ENCODE measurements at regions of chr1 and their contacts with region 1.

Region 1: DNA sequence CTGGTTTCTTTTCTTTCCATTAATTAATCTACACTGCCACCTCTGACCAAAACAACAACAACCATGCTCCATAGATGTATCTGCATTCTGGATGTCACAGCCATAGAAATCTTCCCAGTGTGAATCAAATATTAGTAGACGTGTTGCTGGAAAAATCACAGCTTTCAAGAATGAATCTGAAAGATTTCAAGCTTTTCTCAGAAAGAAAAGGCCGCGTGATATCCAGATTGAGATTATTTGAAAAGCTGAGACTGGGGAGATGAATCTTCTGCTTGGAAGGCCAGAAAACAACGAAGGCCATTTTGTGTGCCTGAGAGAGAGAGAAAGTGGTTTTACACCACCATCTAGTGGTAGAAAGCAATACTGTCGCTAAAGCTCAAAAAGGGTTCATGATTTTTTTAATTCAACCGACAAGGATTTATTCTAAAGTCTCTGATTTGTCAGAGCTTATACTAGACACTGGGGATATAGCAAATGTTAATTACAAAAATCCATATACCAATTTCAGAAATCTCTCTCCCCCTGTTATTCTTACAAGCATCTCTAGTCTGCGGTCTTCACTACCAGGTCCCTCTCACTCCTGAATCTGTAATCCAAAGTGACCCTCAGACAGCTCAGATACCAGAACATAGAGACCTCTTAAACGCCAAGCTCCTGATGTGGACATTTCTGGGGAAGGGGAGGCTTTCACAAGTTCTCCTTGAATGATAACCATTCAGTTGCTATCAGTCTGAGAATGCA is 87.5 kb upstream of the SGIP1 start:
- DNase-seq: peak in 3 of 4 donors; percentile 9 to 46 (median 30)
- ATAC-seq: peak; percentile 75
- H3K4me3 ChIP-seq: no peak overlapping the region
- H3K27ac ChIP-seq: no peak overlapping the region
- H3K4me1 ChIP-seq: no peaks in the 10 kb centered on the region
- H3K27me3 ChIP-seq: no peaks in the 10 kb centered on the region
- CTCF ChIP-seq: peak; percentile 75 to 96 (median 94)
- POLR2A ChIP-seq: no peak

Region 2: GRCh38 chr1:65959896-65960567 is 486.4 kb before region 1 on chr1:
- intact Hi-C with region 1: loop called (anchors 5 kb)
- DNase-seq: no peak
- ATAC-seq: no peak
- H3K4me3 ChIP-seq: no peak overlapping the region
- H3K27ac ChIP-seq: no peak overlapping the region
- H3K4me1 ChIP-seq: no peaks in the 10 kb centered on the region
- H3K27me3 ChIP-seq: no peaks in the 10 kb centered on the region
- CTCF ChIP-seq: no peak
- POLR2A ChIP-seq: no peak

Region 3: GRCh38 chr1:66258404-66259105 is 187.9 kb before region 1 on chr1:
- intact Hi-C with region 1: loop called (anchors 5 kb)
- DNase-seq: no peak
- ATAC-seq: no peak
- H3K4me3 ChIP-seq: no peak overlapping the region
- H3K27ac ChIP-seq: no peak overlapping the region
- H3K4me1 ChIP-seq: no peaks in the 10 kb centered on the region
- H3K27me3 ChIP-seq: no peaks in the 10 kb centered on the region
- CTCF ChIP-seq: no peak
- POLR2A ChIP-seq: no peak

Region 4: DNA sequence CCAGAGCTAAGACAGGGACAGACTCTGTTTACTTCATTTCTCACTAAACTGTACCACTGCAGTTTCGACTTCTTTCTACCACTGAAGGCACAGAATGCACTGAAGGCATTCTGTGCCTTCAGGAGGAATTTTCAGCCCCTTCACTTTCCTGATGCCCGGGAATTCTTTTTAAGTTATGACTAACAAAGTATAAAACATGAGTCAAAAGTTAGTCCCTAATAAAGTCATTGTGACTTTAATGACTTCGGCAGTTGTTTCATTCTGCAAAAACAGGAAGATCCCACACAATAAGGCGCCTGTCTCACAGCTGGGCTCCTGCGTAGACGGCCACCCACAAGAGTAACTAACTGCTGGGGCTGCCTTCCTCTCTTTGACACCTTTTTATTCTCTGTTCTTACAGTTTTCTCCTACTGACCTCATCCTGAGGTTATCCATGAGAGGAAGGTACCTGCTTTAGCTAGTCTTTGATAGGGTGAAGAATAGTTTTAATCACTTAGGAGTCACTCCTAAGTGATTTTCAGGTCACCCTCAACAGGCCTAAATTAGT is 96.4 kb before region 1 on chr1:
- intact Hi-C with region 1: no loop called
- DNase-seq: peak in 1 of 4 donors; percentile 46
- ATAC-seq: no peak
- H3K4me3 ChIP-seq: no peak overlapping the region
- H3K27ac ChIP-seq: peak overlapping the region in 2 of 4 donors; percentile 8 to 42
- H3K4me1 ChIP-seq: no peaks in the 10 kb centered on the region
- H3K27me3 ChIP-seq: no peaks in the 10 kb centered on the region
- CTCF ChIP-seq: no peak
- POLR2A ChIP-seq: no peak

Measured in body of pancreas (tissue), 4 donors.